Activated CD8-positive, alpha-beta memory T cell treated with anti-CD3 and anti-CD28 coated beads, Interleukin-2, amount 10 ng/mL, durations not matched to agents 7 days and 5 days (primary cell): ENCODE measurements at regions of chr1 and their contacts with region 1.

Region 1: DNA sequence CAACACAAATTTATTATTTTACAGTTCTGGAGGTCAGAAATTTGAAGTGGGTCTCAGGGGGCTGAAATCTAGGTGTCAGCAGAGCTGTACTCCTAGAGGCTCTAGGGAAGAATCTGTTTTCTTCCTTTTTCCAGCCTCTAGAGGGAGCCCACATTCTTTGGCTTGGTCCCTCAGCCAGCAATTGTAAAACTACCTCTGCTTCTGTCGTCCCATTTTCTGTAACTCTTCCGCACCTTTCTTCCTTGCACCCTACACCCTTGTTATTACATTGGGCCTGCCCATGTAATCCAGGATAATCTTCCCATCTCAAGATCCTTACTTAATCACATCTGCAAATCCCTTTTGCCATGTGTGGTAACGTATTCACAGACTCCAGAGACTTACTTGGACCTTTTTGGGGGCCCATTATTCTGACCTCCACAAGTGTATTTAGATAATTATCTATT is 24.8 kb upstream of the THEM4 start:
- DNase-seq: peak; percentile 58
- ATAC-seq: peak; percentile 92
- H3K4me3 Mint-ChIP-seq: no peak overlapping the region
- H3K27ac Mint-ChIP-seq: no peak overlapping the region
- H3K4me1 Mint-ChIP-seq: peaks cover 2% of the 10 kb centered on the region
- H3K27me3 Mint-ChIP-seq: peaks cover 4% of the 10 kb centered on the region

Region 2: DNA sequence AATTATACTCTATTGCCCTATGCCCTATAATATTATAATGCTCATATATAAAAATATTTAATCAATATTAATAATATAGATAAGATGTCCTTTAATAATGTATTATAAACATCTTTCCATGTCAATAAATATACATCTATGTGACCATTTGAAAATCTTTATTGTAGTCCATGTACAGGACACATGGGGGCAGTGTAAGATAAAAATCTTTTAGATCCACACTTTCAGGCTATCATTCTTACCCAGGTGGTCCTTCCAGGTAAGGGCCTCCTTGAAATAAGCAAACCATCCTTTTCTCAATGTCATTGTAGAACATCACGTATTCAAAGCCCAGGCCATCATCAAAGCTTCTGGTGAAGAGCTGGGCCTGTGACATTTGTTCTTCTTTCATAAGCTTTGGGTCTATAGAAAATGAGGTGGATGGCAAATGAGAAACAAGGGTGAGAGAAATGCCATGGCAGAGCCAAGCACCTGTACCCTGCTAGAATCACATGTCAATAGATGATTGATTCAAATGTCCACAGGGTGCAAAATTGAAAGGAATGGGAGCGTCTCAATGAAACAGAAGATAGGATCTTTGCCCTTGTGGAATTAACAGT is 45.0 kb before region 1 on chr1:
- CTCF ChIA-PET with region 1: interaction called, 17 read pairs
- DNase-seq: no peak
- ATAC-seq: peak; percentile 42
- H3K4me3 Mint-ChIP-seq: no peak overlapping the region
- H3K27ac Mint-ChIP-seq: no peak overlapping the region
- H3K4me1 Mint-ChIP-seq: peaks cover 19% of the 10 kb centered on the region
- H3K27me3 Mint-ChIP-seq: no peaks in the 10 kb centered on the region

Region 3: DNA sequence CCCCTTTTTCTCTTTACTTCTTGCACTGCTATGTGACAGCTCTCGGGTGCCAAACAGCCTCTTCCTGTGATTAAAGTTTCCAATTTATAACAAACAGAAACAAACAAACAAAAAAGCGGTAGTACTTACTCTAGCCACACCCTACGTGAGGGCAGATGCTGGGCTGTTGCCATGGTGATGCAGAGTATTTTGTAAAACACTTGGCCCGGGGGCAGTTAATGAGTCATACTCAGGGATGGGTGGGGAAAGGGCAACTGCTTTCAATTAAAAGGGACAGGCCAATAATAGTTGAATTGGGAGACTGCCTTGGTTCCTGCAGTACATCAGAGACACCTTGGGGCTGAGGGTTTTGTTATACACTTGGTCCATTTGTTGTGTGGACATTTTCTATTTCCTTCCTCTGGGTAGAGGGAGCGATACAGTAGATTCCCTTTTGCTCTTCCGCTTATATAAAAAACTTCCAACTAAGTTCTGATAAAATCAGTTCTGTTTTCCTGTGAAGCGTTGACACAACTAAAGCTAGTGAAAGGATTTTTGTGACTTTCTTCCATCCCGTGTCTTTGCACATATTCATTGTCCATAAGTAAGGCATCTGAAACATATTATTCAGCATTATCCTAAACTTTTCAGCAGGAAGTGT is 11.8 kb after region 1 on chr1:
- CTCF ChIA-PET with region 1: interaction called, 22 read pairs
- DNase-seq: peak; percentile 94
- ATAC-seq: peak; percentile 83
- H3K4me3 Mint-ChIP-seq: peak overlapping the region; percentile 54
- H3K27ac Mint-ChIP-seq: peak overlapping the region; percentile 88
- H3K4me1 Mint-ChIP-seq: peaks cover 34% of the 10 kb centered on the region
- H3K27me3 Mint-ChIP-seq: no peaks in the 10 kb centered on the region

Region 4: GRCh38 chr1:152034646-152035405 is 100.8 kb after region 1 on chr1:
- CTCF ChIA-PET with region 1: interaction called, 14 read pairs
- DNase-seq: peak; percentile 83
- ATAC-seq: peak; percentile 72
- H3K4me3 Mint-ChIP-seq: peak overlapping the region; percentile 96
- H3K27ac Mint-ChIP-seq: peak overlapping the region; percentile 94
- H3K4me1 Mint-ChIP-seq: peaks cover 40% of the 10 kb centered on the region
- H3K27me3 Mint-ChIP-seq: no peaks in the 10 kb centered on the region

Region 5: GRCh38 chr1:152220166-152221163 is 286.4 kb after region 1 on chr1:
- CTCF ChIA-PET with region 1: no interaction called
- DNase-seq: no peak
- ATAC-seq: no peak
- H3K4me3 Mint-ChIP-seq: no peak overlapping the region
- H3K27ac Mint-ChIP-seq: no peak overlapping the region
- H3K4me1 Mint-ChIP-seq: no peaks in the 10 kb centered on the region
- H3K27me3 Mint-ChIP-seq: peaks cover 6% of the 10 kb centered on the region